Left cardiac atrium (tissue), 4 donors: ENCODE measurements at regions of chr12 and their contacts with region 1.

Region 1: GRCh38 chr12:92136965-92137721 is 8.5 kb downstream of the BTG1 start:
- DNase-seq: no peak
- ATAC-seq: peak in 1 of 2 donors; percentile 25

Region 2: DNA sequence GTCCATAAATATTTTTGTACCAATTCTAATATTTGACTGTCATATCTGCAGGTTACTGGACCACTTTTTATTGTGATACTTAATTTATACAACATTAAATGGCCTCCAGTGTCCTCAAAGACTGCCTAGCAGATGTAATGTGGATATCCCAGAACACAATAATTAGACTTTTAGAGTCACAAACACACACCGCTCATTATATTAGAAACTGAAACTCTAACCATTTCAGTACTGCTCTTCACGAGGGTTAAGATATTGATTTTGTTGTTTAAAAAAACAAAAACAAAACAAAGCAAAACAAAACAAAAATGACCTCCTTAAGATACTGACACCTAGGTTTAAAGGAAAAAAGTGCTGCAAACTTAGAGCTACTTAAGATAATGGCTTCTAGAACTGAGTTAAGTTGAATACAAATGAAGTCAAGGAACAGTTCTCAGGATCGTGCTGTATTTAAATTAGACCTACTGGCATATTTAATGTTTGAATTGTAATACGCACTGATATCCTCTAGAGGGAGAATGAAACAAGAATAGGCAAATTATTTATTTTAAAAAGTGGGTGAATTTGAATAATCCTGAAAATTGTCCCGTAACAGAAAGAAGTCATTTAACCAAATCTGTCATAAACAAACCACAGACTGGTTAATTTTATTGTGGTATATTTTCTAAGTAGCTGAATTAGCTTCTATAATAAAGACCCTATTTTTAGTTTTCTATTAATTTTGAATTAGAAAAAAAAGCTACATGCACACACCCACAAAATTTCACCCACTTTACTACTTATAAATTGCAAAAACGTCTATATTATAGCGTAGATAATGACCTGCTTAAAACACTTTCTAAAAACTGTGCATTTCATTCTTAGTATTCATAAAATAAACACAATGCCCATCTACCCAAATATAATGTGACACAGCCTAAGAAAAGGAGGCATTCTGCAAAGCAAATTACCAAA is 559.3 kb before region 1 on chr12:
- intact Hi-C with region 1: loop called in 1 of 2 experiments (anchors 10 kb)
- DNase-seq: no peak
- ATAC-seq: peak; percentile 47 to 51

Region 3: GRCh38 chr12:91978143-91978542 is 159.0 kb before region 1 on chr12:
- intact Hi-C with region 1: no loop called
- DNase-seq: no peak
- ATAC-seq: no peak

Region 4: GRCh38 chr12:92078167-92079053 is 58.7 kb before region 1 on chr12:
- intact Hi-C with region 1: loop called in 1 of 2 experiments (anchors 5 kb)
- DNase-seq: no peak
- ATAC-seq: peak in 1 of 2 donors; percentile 82